Mammary epithelial cell (primary cell): ENCODE measurements at regions of chr15 and their contacts with region 1.

Region 1: DNA sequence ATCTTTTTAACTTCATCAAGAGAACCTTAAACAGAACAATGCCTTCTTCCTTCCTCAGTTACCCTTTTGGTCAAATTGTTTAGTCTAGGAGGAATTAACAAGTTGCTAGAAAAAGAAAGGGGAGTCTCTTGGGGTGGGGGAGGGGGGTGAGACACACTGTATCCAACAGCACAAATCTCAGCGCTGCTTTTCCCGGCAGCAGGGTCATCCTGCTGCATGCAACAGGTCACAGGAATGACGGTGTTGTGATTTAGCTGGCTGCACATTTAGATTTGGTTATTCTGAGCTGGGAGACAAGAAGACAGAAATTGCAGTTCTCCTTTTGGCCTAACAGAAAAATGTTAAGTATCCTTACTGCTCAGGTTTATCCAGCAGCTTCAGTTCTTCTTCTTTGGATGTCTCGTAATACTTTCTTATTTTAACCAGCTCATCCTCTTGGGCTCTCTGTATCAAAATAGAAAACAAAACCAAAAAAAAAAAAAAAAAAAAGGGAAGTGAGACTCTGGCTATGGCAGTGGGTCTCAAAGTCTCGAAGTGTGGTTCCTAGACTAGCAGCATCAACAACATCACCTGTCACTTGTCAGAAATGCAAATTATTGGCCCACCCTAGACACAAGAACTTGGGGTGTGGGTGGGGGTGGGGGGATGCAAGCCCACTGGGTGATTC is 190.5 kb downstream of the GREM1 start:
- DNase-seq: no peak
- H3K4me3 ChIP-seq: no peak overlapping the region
- H3K27ac ChIP-seq: no peak overlapping the region
- H3K4me1 ChIP-seq: no peaks in the 10 kb centered on the region
- H3K27me3 ChIP-seq: no peaks in the 10 kb centered on the region
- CTCF ChIP-seq: no peak

Region 2: DNA sequence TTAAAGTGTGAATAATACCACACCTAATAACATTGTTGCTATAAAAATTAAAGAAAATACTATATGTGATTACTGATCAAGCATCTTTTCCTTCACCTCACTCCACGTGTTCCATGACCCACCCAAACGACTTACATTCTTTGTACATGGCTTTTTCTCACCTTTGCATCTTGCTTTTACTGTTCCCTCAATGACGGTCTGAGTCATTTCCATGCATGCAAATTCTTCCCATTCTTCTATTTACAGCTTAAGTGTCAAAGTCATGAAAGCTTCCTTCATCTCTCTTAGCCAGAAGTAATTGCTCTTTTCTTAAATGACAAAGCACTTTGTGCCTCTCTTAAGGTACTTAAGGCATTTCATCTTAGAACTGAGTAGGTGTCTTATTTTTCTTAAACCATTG is 126.5 kb before region 1 on chr15:
- CTCF ChIA-PET with region 1: no interaction called
- dilution Hi-C with region 1: no loop called
- in situ Hi-C with region 1: no loop called
- intact Hi-C with region 1: no loop called
- DNase-seq: no peak
- H3K4me3 ChIP-seq: no peak overlapping the region
- H3K27ac ChIP-seq: no peak overlapping the region
- H3K4me1 ChIP-seq: no peaks in the 10 kb centered on the region
- H3K27me3 ChIP-seq: no peaks in the 10 kb centered on the region
- CTCF ChIP-seq: no peak

Region 3: DNA sequence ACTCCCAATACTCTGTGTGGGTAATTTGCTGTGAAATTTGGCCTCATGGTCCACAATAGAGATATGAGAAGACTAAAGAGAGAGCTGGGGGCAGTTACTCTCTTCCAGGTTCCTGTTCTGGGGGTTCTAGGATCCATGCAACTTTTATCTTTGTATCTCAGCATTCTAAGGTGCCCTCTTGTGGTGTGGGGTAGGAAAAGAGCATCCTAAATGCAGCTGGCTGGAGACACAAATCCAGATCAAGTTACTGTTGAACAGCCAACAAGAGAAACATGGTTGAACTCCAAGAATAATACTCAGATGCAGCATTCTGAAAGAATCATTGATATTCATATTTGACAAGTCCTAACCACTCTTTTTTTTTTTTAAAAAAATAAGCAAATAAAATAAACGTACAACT is 47.7 kb after region 1 on chr15:
- CTCF ChIA-PET with region 1: interaction called, 13 read pairs
- dilution Hi-C with region 1: no loop called
- in situ Hi-C with region 1: no loop called
- intact Hi-C with region 1: no loop called
- DNase-seq: peak; percentile 25
- H3K4me3 ChIP-seq: no peak overlapping the region
- H3K27ac ChIP-seq: no peak overlapping the region
- H3K4me1 ChIP-seq: no peaks in the 10 kb centered on the region
- H3K27me3 ChIP-seq: no peaks in the 10 kb centered on the region
- CTCF ChIP-seq: peak; percentile 54 to 75

Region 4: DNA sequence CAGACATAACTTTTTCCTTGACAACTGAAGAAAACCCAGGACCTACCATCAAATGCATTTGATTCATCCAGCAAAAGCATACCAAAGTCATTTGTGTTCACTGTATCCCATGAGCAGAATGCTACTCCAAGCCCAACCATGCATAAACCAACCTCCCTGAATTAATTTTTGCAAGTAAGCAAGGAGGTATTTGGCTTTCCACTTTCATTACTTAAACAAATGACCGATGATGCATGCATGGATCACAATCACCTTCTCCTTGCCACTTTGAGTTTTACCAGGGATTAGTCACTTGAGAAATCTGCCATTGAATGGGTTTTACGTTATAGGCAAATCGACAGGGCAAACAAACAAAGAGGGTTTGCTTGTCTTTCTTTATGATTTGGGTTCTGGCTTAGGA is 71.4 kb after region 1 on chr15:
- CTCF ChIA-PET with region 1: no interaction called
- dilution Hi-C with region 1: loop called (anchors 5 kb)
- in situ Hi-C with region 1: no loop called
- intact Hi-C with region 1: no loop called
- DNase-seq: peak; percentile 61
- H3K4me3 ChIP-seq: no peak overlapping the region
- H3K27ac ChIP-seq: no peak overlapping the region
- H3K4me1 ChIP-seq: no peaks in the 10 kb centered on the region
- H3K27me3 ChIP-seq: no peaks in the 10 kb centered on the region
- CTCF ChIP-seq: no peak